Activated CD4-positive, alpha-beta memory T cell treated with anti-CD3 and anti-CD28 coated beads for 36 hours (primary cell): ENCODE measurements at regions of chr3 and their contacts with region 1.

Region 1: GRCh38 chr3:18888368-18888767 is 259.9 kb upstream of the KCNH8 start:
- DNase-seq: no peak
- H3K4me3 Mint-ChIP-seq: no peak overlapping the region
- H3K27ac Mint-ChIP-seq: no peak overlapping the region
- H3K4me1 Mint-ChIP-seq: no peaks in the 10 kb centered on the region
- H3K27me3 Mint-ChIP-seq: peaks cover 30% of the 10 kb centered on the region

Region 2: GRCh38 chr3:18847583-18848197 is 40.7 kb before region 1 on chr3:
- CTCF ChIA-PET with region 1: interaction called, 4 read pairs
- POLR2A ChIA-PET with region 1: no interaction called
- intact Hi-C with region 1: loop called (anchors 5 kb)
- DNase-seq: no peak
- H3K4me3 Mint-ChIP-seq: no peak overlapping the region
- H3K27ac Mint-ChIP-seq: no peak overlapping the region
- H3K4me1 Mint-ChIP-seq: peaks cover 9% of the 10 kb centered on the region
- H3K27me3 Mint-ChIP-seq: peaks cover 3% of the 10 kb centered on the region